Ovary (tissue), 10 donors: ENCODE measurements at regions of chr2 and their contacts with region 1.

Region 1: GRCh38 chr2:167140767-167141166 is 252.5 kb downstream of the XIRP2 start:
- DNase-seq: no peak
- H3K4me3 ChIP-seq: no peak overlapping the region
- H3K27ac ChIP-seq: no peak overlapping the region
- H3K4me1 ChIP-seq: no peaks in the 10 kb centered on the region
- H3K27me3 ChIP-seq: no peaks in the 10 kb centered on the region
- CTCF ChIP-seq: no peak
- EP300 ChIP-seq: no peak
- POLR2A ChIP-seq: no peak

Region 2: GRCh38 chr2:167181134-167181533 is 40.4 kb after region 1 on chr2:
- intact Hi-C with region 1: no loop called
- DNase-seq: no peak
- H3K4me3 ChIP-seq: no peak overlapping the region
- H3K27ac ChIP-seq: no peak overlapping the region
- H3K4me1 ChIP-seq: no peaks in the 10 kb centered on the region
- H3K27me3 ChIP-seq: no peaks in the 10 kb centered on the region
- CTCF ChIP-seq: no peak
- EP300 ChIP-seq: no peak
- POLR2A ChIP-seq: no peak

Region 3: GRCh38 chr2:167322795-167323194 is 182.0 kb after region 1 on chr2:
- intact Hi-C with region 1: loop called in 1 of 4 experiments (anchors 10 kb)
- DNase-seq: no peak
- H3K4me3 ChIP-seq: no peak overlapping the region
- H3K27ac ChIP-seq: no peak overlapping the region
- H3K4me1 ChIP-seq: no peaks in the 10 kb centered on the region
- H3K27me3 ChIP-seq: no peaks in the 10 kb centered on the region
- CTCF ChIP-seq: no peak
- EP300 ChIP-seq: no peak
- POLR2A ChIP-seq: no peak